Endothelial cell of umbilical vein (primary cell): ENCODE measurements at regions of chr17 and their contacts with region 1.

Region 1: DNA sequence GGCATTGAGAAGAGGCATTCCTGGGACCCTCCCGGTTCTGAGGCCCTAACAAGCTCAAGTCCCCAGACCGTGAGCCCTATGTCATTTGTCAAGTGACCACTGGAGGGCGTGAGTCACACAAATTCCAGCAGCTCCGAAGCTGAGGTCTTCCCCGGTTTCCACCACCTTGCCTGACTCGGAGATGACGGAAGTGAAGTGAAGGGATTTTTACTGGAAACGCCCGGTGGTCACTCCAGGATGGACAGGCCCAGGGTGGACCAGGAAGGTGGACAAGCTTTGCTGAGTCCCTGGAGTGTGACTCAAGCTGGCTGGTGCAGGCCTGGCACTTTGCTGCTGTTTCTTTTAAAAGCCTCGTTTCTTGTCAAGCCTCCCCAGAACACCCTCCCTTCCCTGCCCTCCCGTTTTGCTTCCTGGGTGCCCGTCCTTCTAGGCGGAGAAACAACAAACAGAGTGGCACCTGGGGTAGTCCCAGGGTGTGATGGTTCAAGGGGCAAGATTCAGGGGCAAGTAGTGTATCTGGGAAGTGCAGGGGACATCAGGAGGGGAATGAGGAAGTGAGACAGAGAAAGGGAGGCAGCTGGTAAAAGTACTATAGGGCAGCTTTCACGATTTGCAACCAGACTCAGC is 5.3 kb upstream of the NOS2 start:
- DNase-seq: peak; percentile 86
- H3K4me3 ChIP-seq: peak overlapping the region in 1 of 3 experiments; percentile 10
- H3K27ac ChIP-seq: peak overlapping the region; percentile 19
- H3K4me1 ChIP-seq: peaks cover 4% of the 10 kb centered on the region
- H3K27me3 ChIP-seq: peaks cover 0 to 5% of the 10 kb centered on the region in 2 experiments
- CTCF ChIP-seq: peak; percentile 83 to 85
- POLR2A ChIP-seq: no peak

Region 2: GRCh38 chr17:27782791-27783206 is 22.8 kb before region 1 on chr17:
- CTCF ChIA-PET with region 1: interaction called, 12 read pairs
- POLR2A ChIA-PET with region 1: no interaction called
- dilution Hi-C with region 1: no loop called
- intact Hi-C with region 1: no loop called
- DNase-seq: no peak
- H3K4me3 ChIP-seq: no peak overlapping the region
- H3K27ac ChIP-seq: no peak overlapping the region
- H3K4me1 ChIP-seq: no peaks in the 10 kb centered on the region
- H3K27me3 ChIP-seq: no peaks in the 10 kb centered on the region
- CTCF ChIP-seq: no peak
- POLR2A ChIP-seq: no peak

Region 3: GRCh38 chr17:27846042-27846655 is 40.5 kb after region 1 on chr17:
- CTCF ChIA-PET with region 1: interaction called, 22 read pairs
- POLR2A ChIA-PET with region 1: no interaction called
- dilution Hi-C with region 1: no loop called
- intact Hi-C with region 1: no loop called
- DNase-seq: no peak
- H3K4me3 ChIP-seq: no peak overlapping the region
- H3K27ac ChIP-seq: no peak overlapping the region
- H3K4me1 ChIP-seq: no peaks in the 10 kb centered on the region
- H3K27me3 ChIP-seq: peaks cover 2 to 8% of the 10 kb centered on the region in 2 experiments
- CTCF ChIP-seq: no peak
- POLR2A ChIP-seq: no peak

Region 4: DNA sequence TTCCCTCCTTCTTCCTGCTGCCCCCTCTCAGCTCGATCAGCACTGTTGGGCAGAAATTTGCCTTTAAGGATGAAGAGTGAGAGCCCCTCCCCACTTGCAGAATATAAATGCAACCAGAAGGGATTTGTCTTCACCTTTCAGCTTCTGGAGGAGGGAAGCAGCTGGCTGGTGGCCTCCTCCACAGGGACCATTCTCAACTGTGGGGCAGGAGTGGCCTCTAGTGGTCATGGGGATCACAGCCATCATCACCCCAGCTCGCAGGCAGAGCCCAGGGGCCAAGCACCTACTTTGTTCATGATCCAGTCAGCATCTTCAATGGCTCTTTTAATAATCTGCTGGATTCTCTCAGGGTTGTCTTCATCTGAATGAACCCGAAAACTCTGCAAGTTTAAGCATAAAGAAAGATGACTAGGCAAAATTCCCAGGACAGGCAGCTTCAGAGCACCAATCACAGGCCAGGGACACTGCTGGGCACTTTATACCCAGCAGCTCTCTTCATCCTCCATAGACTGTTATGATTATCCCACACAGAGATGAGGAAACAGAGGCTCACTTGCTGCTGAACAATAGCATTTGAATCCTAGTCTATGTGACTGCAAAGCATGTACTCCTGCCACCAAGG is 74.5 kb after region 1 on chr17:
- CTCF ChIA-PET with region 1: interaction called, 545 read pairs
- POLR2A ChIA-PET with region 1: interaction called, 7 read pairs
- dilution Hi-C with region 1: no loop called
- intact Hi-C with region 1: loop called (anchors 1 kb)
- DNase-seq: peak; percentile 60
- H3K4me3 ChIP-seq: no peak overlapping the region
- H3K27ac ChIP-seq: no peak overlapping the region
- H3K4me1 ChIP-seq: no peaks in the 10 kb centered on the region
- H3K27me3 ChIP-seq: no peaks in the 10 kb centered on the region
- CTCF ChIP-seq: peak; percentile 91 to 93
- POLR2A ChIP-seq: no peak

Region 5: GRCh38 chr17:28318759-28319660 is 513.4 kb after region 1 on chr17 and contains the start of gene TMEM97:
- CTCF ChIA-PET with region 1: interaction called, 7 read pairs
- POLR2A ChIA-PET with region 1: no interaction called
- dilution Hi-C with region 1: no loop called
- intact Hi-C with region 1: loop called (anchors 1 kb)
- DNase-seq: peak; percentile 98
- H3K4me3 ChIP-seq: peak within 1 kb of the TSS; percentile 52 to 80 (median 65)
- H3K27ac ChIP-seq: peak within 1 kb of the TSS; percentile 9
- H3K4me1 ChIP-seq: peaks cover 18% of the 10 kb centered on the region
- H3K27me3 ChIP-seq: peaks cover 0 to under 1% of the 10 kb centered on the region in 2 experiments
- CTCF ChIP-seq: no peak
- POLR2A ChIP-seq: peak; percentile 47
- total RNA-seq, gene TMEM97: 43.5 and 51.7 TPM in 2 replicates